Naive thymus-derived CD4-positive, alpha-beta T cell (primary cell): ENCODE measurements at regions of chr6 and their contacts with region 1.

Region 1: DNA sequence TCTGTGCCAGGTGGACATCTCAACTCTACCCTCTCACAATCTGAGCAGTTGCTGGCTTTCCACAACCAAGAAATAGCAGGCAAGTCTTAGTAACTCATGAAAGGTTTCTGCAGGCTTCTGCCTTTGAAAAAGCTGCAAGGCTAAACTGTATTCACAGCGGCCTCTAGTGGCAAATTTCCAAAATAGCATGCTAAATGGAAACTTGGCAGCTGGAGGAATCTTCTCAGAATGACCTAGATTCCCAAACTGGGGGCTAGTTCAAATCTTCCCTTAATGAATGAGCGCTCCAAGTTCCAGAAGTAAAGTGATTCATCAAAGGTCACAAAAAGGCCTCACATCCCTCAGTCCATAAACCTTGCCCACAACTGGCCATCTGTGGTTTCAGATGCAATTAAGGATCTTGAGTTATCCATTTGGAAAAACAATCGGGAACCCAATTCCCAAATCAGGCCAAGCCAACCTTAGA is 11.9 kb upstream of the CPNE5 start:
- DNase-seq: peak in 5 of 9 donors; percentile 38 to 54 (median 44)
- ATAC-seq: no peak
- H3K4me3 ChIP-seq: no peak overlapping the region
- H3K4me3 Mint-ChIP-seq: no peak overlapping the region
- H3K27ac ChIP-seq: no peak overlapping the region
- H3K27ac Mint-ChIP-seq: no peak overlapping the region
- H3K4me1 ChIP-seq: no peaks in the 10 kb centered on the region
- H3K4me1 Mint-ChIP-seq: peaks cover 0 to 13% (median 7%) of the 10 kb centered on the region in 7 donors
- H3K27me3 ChIP-seq: no peaks in the 10 kb centered on the region
- H3K27me3 Mint-ChIP-seq: peaks cover 0 to 5% (median 5%) of the 10 kb centered on the region in 5 donors

Region 2: DNA sequence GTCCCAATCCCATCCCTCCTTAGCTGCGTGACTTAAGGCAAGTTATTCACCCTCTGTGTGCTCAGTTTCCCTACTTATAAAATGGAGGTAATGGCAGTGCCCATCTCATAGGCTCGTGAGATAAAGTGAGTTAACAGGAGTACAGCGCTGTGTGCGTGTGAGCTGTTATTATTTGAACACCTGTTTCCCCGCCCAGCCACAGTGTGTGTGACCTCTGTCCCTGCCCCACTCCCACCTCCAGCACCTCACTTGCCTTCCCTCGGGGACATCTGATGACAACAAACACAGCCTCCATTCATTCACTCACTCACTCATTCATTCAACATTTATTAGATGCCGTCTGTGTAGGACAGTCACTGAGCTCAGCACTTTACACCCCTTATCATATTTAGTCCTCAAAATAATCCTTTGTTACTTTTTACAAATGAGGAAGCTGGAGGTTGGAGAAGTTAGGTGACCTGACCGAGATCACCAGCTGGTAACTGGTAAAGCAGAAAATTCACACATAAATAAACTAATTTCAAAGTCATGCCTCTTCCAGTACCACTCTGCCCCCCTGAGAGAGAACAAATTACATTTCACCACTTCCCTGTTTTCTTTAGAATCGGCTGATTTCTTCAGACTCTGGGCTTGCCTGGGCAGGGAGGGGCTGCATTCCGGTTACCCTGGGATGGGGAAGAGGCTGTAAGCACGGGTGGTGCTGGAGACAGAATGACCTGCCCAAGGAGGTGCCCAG is 70.6 kb before region 1 on chr6:
- CTCF ChIA-PET with region 1: interaction called, 3 read pairs
- POLR2A ChIA-PET with region 1: no interaction called
- intact Hi-C with region 1: loop called in 1 of 2 experiments (anchors 5 kb)
- DNase-seq: no peak
- ATAC-seq: peak; percentile 31
- H3K4me3 ChIP-seq: no peak overlapping the region
- H3K4me3 Mint-ChIP-seq: no peak overlapping the region
- H3K27ac ChIP-seq: no peak overlapping the region
- H3K27ac Mint-ChIP-seq: peak overlapping the region in 2 of 9 donors; percentile 26 to 77
- H3K4me1 ChIP-seq: no peaks in the 10 kb centered on the region
- H3K4me1 Mint-ChIP-seq: peaks cover 0 to 11% (median 5%) of the 10 kb centered on the region in 7 donors
- H3K27me3 ChIP-seq: no peaks in the 10 kb centered on the region
- H3K27me3 Mint-ChIP-seq: peaks cover 0 to 22% (median 0%) of the 10 kb centered on the region in 5 donors